Endothelial cell of umbilical vein (primary cell): ENCODE measurements at regions of chr18 and their contacts with region 1.

Region 1: GRCh38 chr18:34661464-34662111 is 48.5 kb upstream of the DTNA start:
- DNase-seq: peak; percentile 62
- H3K4me3 ChIP-seq: no peak overlapping the region
- H3K27ac ChIP-seq: no peak overlapping the region
- H3K4me1 ChIP-seq: peaks cover 21% of the 10 kb centered on the region
- H3K27me3 ChIP-seq: no peaks in the 10 kb centered on the region
- CTCF ChIP-seq: peak; percentile 73 to 75
- POLR2A ChIP-seq: no peak

Region 2: GRCh38 chr18:34493099-34493544 is 168.5 kb before region 1 on chr18:
- CTCF ChIA-PET with region 1: interaction called, 3 read pairs
- POLR2A ChIA-PET with region 1: no interaction called
- dilution Hi-C with region 1: no loop called
- intact Hi-C with region 1: loop called (anchors 1 kb)
- DNase-seq: peak; percentile 87
- H3K4me3 ChIP-seq: peak overlapping the region; percentile 57 to 85 (median 72)
- H3K27ac ChIP-seq: peak overlapping the region; percentile 68
- H3K4me1 ChIP-seq: no peaks in the 10 kb centered on the region
- H3K27me3 ChIP-seq: no peaks in the 10 kb centered on the region
- CTCF ChIP-seq: no peak
- POLR2A ChIP-seq: no peak

Region 3: GRCh38 chr18:34624551-34624950 is 37.0 kb before region 1 on chr18:
- CTCF ChIA-PET with region 1: interaction called, 10 read pairs
- POLR2A ChIA-PET with region 1: no interaction called
- dilution Hi-C with region 1: no loop called
- intact Hi-C with region 1: no loop called
- DNase-seq: peak; percentile 66
- H3K4me3 ChIP-seq: no peak overlapping the region
- H3K27ac ChIP-seq: no peak overlapping the region
- H3K4me1 ChIP-seq: peaks cover 22% of the 10 kb centered on the region
- H3K27me3 ChIP-seq: no peaks in the 10 kb centered on the region
- CTCF ChIP-seq: no peak
- POLR2A ChIP-seq: no peak

Region 4: DNA sequence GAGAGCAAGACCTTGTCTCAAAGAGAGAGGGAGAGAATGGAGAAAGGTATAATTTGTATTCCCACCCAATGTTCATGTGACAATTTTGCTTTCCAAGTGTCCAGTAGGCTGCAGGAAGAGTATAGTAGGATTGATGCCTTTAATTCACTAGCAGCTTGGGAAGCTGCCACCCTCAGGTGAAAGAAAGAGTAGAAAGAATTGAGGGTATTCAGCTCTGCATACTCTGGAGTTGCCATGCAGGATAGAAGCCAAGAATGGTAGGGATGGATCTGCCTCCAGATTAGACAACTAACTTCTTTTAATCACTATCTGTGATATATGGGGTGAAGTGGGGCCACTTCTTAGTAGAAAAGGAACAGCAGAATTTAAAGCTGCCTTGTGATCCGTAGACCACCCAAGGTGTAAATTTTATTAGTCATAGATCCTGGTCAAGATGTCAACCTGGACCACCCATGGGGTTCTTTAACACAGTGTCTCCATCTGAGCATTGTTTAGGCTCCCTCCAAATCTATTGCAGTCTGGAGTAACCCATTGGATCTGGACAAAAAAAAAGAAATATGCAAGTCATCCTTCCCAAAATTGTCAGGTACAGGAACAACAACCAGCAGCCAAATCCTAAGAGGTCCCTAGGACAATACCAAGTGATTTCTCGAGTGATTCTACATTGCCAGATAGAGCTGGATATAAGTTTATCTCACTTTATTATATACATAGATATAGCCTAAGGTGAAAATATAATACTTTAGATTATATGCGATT is 15.4 kb after region 1 on chr18:
- CTCF ChIA-PET with region 1: interaction called, 39 read pairs
- POLR2A ChIA-PET with region 1: no interaction called
- dilution Hi-C with region 1: no loop called
- intact Hi-C with region 1: no loop called
- DNase-seq: no peak
- H3K4me3 ChIP-seq: no peak overlapping the region
- H3K27ac ChIP-seq: no peak overlapping the region
- H3K4me1 ChIP-seq: no peaks in the 10 kb centered on the region
- H3K27me3 ChIP-seq: no peaks in the 10 kb centered on the region
- CTCF ChIP-seq: no peak
- POLR2A ChIP-seq: no peak

Region 5: DNA sequence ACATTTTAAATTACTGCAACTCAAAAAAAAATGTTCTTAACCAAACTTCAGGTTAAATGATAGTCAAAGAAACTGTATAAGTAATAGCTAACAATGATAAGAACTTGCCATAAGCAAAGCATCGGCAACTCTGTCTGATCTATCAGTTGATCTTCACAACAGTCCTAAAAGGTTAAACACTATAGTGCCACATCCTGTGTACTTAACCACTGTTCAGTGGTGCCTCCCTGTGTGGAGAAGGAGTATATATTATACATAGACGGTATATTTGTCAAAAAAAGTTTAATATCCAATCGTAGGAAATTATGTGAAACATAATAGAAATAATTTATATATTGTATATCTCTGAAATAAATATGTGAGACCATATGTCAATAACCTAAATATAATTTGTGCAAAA is 61.6 kb after region 1 on chr18:
- CTCF ChIA-PET with region 1: interaction called, 28 read pairs
- POLR2A ChIA-PET with region 1: no interaction called
- dilution Hi-C with region 1: no loop called
- intact Hi-C with region 1: loop called (anchors 5 kb)
- DNase-seq: no peak
- H3K4me3 ChIP-seq: no peak overlapping the region
- H3K27ac ChIP-seq: no peak overlapping the region
- H3K4me1 ChIP-seq: no peaks in the 10 kb centered on the region
- H3K27me3 ChIP-seq: no peaks in the 10 kb centered on the region
- CTCF ChIP-seq: no peak
- POLR2A ChIP-seq: no peak

Region 6: DNA sequence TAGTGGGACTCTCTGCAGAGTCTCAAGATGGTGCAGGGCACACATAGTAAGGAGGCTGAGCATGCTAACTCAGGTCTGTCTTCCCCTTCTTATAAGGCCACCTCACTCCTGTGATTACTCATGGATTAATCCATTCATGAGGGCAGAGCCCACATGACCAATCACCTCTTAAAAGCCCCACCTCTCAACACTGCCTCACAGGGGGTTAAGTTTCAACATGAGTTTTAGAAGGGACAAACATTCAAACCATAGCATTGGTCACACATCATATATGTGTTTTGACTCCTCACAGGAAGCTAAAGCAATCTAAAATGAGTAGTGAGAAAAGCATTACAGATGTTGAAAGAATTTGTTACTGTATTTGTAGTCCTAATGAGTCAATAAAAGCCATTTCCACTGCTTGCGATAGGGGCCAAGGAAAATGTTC is 106.0 kb after region 1 on chr18:
- CTCF ChIA-PET with region 1: interaction called, 30 read pairs
- POLR2A ChIA-PET with region 1: no interaction called
- dilution Hi-C with region 1: no loop called
- intact Hi-C with region 1: loop called (anchors 5 kb)
- DNase-seq: peak; percentile 73
- H3K4me3 ChIP-seq: no peak overlapping the region
- H3K27ac ChIP-seq: peak overlapping the region; percentile 80
- H3K4me1 ChIP-seq: peaks cover 23% of the 10 kb centered on the region
- H3K27me3 ChIP-seq: no peaks in the 10 kb centered on the region
- CTCF ChIP-seq: no peak
- POLR2A ChIP-seq: no peak

Region 7: GRCh38 chr18:34787931-34788532 is 126.4 kb after region 1 on chr18:
- CTCF ChIA-PET with region 1: interaction called, 314 read pairs
- POLR2A ChIA-PET with region 1: no interaction called
- dilution Hi-C with region 1: no loop called
- intact Hi-C with region 1: loop called (anchors 1 kb)
- DNase-seq: peak; percentile 80
- H3K4me3 ChIP-seq: no peak overlapping the region
- H3K27ac ChIP-seq: no peak overlapping the region
- H3K4me1 ChIP-seq: no peaks in the 10 kb centered on the region
- H3K27me3 ChIP-seq: no peaks in the 10 kb centered on the region
- CTCF ChIP-seq: peak; percentile 37 to 48
- POLR2A ChIP-seq: no peak